ENCODE measurements at regions of chr15 and their contacts with region 1.

Region 1: GRCh38 chr15:65638681-65639089 is 16.9 kb downstream of the SLC24A1 start:
- DNase-seq: peak; percentile 84 to 96
- ATAC-seq: peak; percentile 74 to 87
- H3K4me3 ChIP-seq: no peak overlapping the region
- H3K27ac ChIP-seq: no peak overlapping the region
- H3K4me1 ChIP-seq: peaks cover 17% of the 10 kb centered on the region
- CTCF ChIP-seq: peak; percentile 97
- EP300 ChIP-seq: no peak
- POLR2A ChIP-seq: no peak
- RAD21 ChIP-seq: peak; percentile 88 to 96

Region 2: GRCh38 chr15:65595960-65596359 is 42.7 kb before region 1 on chr15:
- CTCF ChIA-PET with region 1: interaction called, 13 read pairs
- POLR2A ChIA-PET with region 1: no interaction called
- DNase-seq: peak; percentile 53 to 62
- ATAC-seq: peak; percentile 73 to 85; a peak in 5 of 6 replicates
- H3K4me3 ChIP-seq: no peak overlapping the region
- H3K27ac ChIP-seq: no peak overlapping the region
- H3K4me1 ChIP-seq: peaks cover 13% of the 10 kb centered on the region
- CTCF ChIP-seq: peak; percentile 63
- EP300 ChIP-seq: no peak
- POLR2A ChIP-seq: no peak
- RAD21 ChIP-seq: peak; percentile 70 to 77

Region 3: GRCh38 chr15:65655026-65655425 is 16.3 kb after region 1 on chr15:
- CTCF ChIA-PET with region 1: interaction called, 229 read pairs
- POLR2A ChIA-PET with region 1: no interaction called
- DNase-seq: no peak
- ATAC-seq: no peak
- H3K4me3 ChIP-seq: no peak overlapping the region
- H3K27ac ChIP-seq: no peak overlapping the region
- H3K4me1 ChIP-seq: 0 out of 3 replicates have a peak, but pooled peaks cover 3% of the 10 kb centered on the region
- CTCF ChIP-seq: no peak
- EP300 ChIP-seq: no peak
- POLR2A ChIP-seq: no peak
- RAD21 ChIP-seq: no peak

Region 4: GRCh38 chr15:65812916-65813315 is 174.2 kb after region 1 on chr15:
- CTCF ChIA-PET with region 1: interaction called, 13 read pairs
- POLR2A ChIA-PET with region 1: no interaction called
- DNase-seq: no peak
- ATAC-seq: no peak
- H3K4me3 ChIP-seq: no peak overlapping the region
- H3K27ac ChIP-seq: no peak overlapping the region
- H3K4me1 ChIP-seq: no peaks in the 10 kb centered on the region
- CTCF ChIP-seq: no peak
- EP300 ChIP-seq: no peak
- POLR2A ChIP-seq: no peak
- RAD21 ChIP-seq: no peak

Region 5: GRCh38 chr15:65847989-65848388 is 209.3 kb after region 1 on chr15:
- CTCF ChIA-PET with region 1: interaction called, 54 read pairs
- POLR2A ChIA-PET with region 1: no interaction called
- DNase-seq: no peak
- ATAC-seq: no peak
- H3K4me3 ChIP-seq: no peak overlapping the region
- H3K27ac ChIP-seq: no peak overlapping the region
- H3K4me1 ChIP-seq: no peaks in the 10 kb centered on the region
- CTCF ChIP-seq: no peak
- EP300 ChIP-seq: no peak
- POLR2A ChIP-seq: no peak
- RAD21 ChIP-seq: no peak

Region 6: DNA sequence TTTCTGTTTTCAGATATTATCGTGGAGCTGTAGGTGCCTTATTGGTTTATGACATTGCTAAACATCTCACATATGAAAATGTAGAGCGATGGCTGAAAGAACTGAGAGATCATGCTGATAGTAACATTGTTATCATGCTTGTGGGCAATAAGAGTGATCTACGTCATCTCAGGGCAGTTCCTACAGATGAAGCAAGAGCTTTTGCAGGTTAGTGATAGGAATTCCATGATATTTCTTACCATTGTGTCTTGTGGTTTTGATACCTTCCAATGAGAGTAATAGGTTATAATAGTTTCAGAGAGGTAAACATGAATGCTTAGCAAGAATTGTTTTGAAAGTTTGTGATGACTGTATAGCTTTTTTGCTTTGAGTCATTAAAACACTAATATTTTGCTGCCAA is 239.1 kb after region 1 on chr15:
- CTCF ChIA-PET with region 1: interaction called, 13 read pairs
- POLR2A ChIA-PET with region 1: no interaction called
- DNase-seq: no peak
- ATAC-seq: no peak
- H3K4me3 ChIP-seq: no peak overlapping the region
- H3K27ac ChIP-seq: no peak overlapping the region
- H3K4me1 ChIP-seq: peaks cover 3% of the 10 kb centered on the region; the same call in 1 of the 3 replicates
- CTCF ChIP-seq: no peak
- EP300 ChIP-seq: no peak
- POLR2A ChIP-seq: no peak
- RAD21 ChIP-seq: no peak

Measured in A549 (cell line).